ENCODE measurements at regions of chr10 and their contacts with region 1.

Region 1: DNA sequence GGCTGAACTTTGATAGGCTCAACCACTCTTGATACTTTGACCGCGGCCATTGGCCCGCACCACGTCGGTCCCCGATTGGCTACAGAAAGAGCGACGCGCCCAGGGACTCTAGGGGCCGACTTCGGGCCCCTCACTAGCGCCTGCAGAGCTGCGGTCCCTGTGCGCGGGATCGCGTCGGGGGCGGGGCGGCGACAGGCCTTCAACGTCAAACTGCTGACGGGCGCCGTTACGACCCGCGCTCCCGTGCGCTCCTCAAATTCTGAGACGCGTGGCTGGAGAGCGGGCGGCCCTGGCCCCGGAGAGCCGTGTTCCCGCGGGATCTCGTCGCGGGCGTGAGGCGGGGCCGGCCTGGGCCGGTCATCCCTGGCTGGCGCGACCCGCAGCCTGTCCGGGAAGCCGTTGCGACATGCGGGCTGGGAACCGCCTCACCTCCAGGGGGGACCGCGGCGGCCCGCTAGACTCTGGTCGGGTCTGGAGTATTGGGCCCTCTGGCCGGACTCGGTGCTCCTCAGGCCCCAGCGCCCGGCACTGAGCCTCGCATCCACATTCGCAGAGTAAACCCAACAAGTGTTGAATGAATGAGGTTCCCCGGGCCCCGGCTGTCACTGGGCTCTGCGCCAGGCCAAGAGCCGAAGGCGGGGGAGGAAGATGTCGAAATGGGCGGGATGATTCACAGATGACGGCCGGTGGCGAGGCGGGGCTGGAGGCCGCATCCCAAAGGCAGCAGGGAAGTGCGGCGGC is 644 bp upstream of the SLC25A28 start:
- DNase-seq: peak; percentile 79 to 91 (median 86)
- ATAC-seq: peak; percentile 83
- H3K4me3 ChIP-seq: peak overlapping the region; percentile 76 to 78
- H3K4me3 Mint-ChIP-seq: peak overlapping the region; percentile 85
- H3K27ac ChIP-seq: peak overlapping the region; percentile 96 to 97
- H3K27ac Mint-ChIP-seq: peak overlapping the region; percentile 97
- H3K4me1 ChIP-seq: peaks cover 27% of the 10 kb centered on the region
- H3K4me1 Mint-ChIP-seq: peaks cover 45% of the 10 kb centered on the region
- H3K27me3 ChIP-seq: no peaks in the 10 kb centered on the region
- H3K27me3 Mint-ChIP-seq: no peaks in the 10 kb centered on the region
- CTCF ChIP-seq: no peak

Region 2: GRCh38 chr10:98134431-98135221 is 1486.3 kb before region 1 on chr10 and contains the start of gene R3HCC1L:
- CTCF ChIA-PET with region 1: no interaction called
- POLR2A ChIA-PET with region 1: interaction called, 4 read pairs
- intact Hi-C with region 1: loop called in 1 of 2 experiments (anchors 5 kb)
- DNase-seq: peak; percentile 87 to 96 (median 93)
- ATAC-seq: peak; percentile 95
- H3K4me3 ChIP-seq: peak within 1 kb of the TSS; percentile 85
- H3K4me3 Mint-ChIP-seq: peak within 1 kb of the TSS; percentile 92
- H3K27ac ChIP-seq: peak within 1 kb of the TSS; percentile 91 to 93
- H3K27ac Mint-ChIP-seq: peak within 1 kb of the TSS; percentile 97
- H3K4me1 ChIP-seq: peaks cover 23% of the 10 kb centered on the region
- H3K4me1 Mint-ChIP-seq: peaks cover 48% of the 10 kb centered on the region
- H3K27me3 ChIP-seq: no peaks in the 10 kb centered on the region
- H3K27me3 Mint-ChIP-seq: no peaks in the 10 kb centered on the region
- CTCF ChIP-seq: no peak
- total RNA-seq, gene R3HCC1L: 13.6 to 13.7 TPM

Region 3: GRCh38 chr10:98599032-98599610 is 1021.8 kb before region 1 on chr10:
- CTCF ChIA-PET with region 1: no interaction called
- POLR2A ChIA-PET with region 1: no interaction called
- intact Hi-C with region 1: no loop called
- DNase-seq: no peak
- ATAC-seq: no peak
- H3K4me3 ChIP-seq: no peak overlapping the region
- H3K4me3 Mint-ChIP-seq: no peak overlapping the region
- H3K27ac ChIP-seq: no peak overlapping the region
- H3K27ac Mint-ChIP-seq: no peak overlapping the region
- H3K4me1 ChIP-seq: no peaks in the 10 kb centered on the region
- H3K4me1 Mint-ChIP-seq: no peaks in the 10 kb centered on the region
- H3K27me3 ChIP-seq: no peaks in the 10 kb centered on the region
- H3K27me3 Mint-ChIP-seq: peaks cover 13% of the 10 kb centered on the region
- CTCF ChIP-seq: no peak

Region 4: GRCh38 chr10:99292159-99292558 is 328.7 kb before region 1 on chr10:
- CTCF ChIA-PET with region 1: no interaction called
- POLR2A ChIA-PET with region 1: no interaction called
- intact Hi-C with region 1: no loop called
- DNase-seq: no peak
- ATAC-seq: no peak
- H3K4me3 ChIP-seq: no peak overlapping the region
- H3K4me3 Mint-ChIP-seq: no peak overlapping the region
- H3K27ac ChIP-seq: no peak overlapping the region
- H3K27ac Mint-ChIP-seq: no peak overlapping the region
- H3K4me1 ChIP-seq: no peaks in the 10 kb centered on the region
- H3K4me1 Mint-ChIP-seq: no peaks in the 10 kb centered on the region
- H3K27me3 ChIP-seq: no peaks in the 10 kb centered on the region
- H3K27me3 Mint-ChIP-seq: peaks cover 4% of the 10 kb centered on the region
- CTCF ChIP-seq: no peak

Region 5: DNA sequence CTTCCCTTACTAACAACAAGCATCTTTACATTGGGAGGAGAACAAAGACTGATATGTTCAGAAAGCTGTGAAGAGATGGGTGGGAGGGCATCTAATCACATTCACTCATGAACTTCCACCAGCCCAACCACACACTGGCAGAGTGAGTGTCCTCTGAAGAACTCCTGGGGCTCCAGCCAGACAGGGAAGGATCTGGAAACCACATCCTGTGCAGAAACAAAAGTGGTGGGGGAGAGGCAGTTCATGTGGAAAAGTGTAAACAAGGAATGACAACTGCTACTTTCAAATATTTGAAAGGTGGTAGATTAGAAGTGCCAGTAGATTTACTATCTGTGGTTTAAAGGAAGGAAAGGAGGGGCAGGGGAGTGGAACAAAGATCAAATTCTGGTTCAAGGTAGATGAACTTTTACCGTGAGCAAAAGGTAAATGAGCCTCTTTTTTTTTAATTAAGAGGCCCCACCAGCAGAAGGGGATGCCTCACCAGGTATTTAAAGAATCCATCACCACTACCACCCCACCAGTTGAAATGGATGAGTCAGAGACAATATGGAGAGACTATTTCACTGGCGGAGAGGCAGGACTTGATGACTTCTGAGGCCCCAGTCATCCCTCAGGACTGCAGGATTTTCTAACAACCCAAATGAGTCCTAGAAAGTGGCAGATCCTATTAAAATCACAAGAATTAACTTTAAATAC is 225.0 kb before region 1 on chr10:
- CTCF ChIA-PET with region 1: interaction called, 30 read pairs
- POLR2A ChIA-PET with region 1: no interaction called
- intact Hi-C with region 1: no loop called
- DNase-seq: no peak
- ATAC-seq: no peak
- H3K4me3 ChIP-seq: no peak overlapping the region
- H3K4me3 Mint-ChIP-seq: no peak overlapping the region
- H3K27ac ChIP-seq: no peak overlapping the region
- H3K27ac Mint-ChIP-seq: peak overlapping the region; percentile 69
- H3K4me1 ChIP-seq: no peaks in the 10 kb centered on the region
- H3K4me1 Mint-ChIP-seq: peaks cover 9% of the 10 kb centered on the region
- H3K27me3 ChIP-seq: no peaks in the 10 kb centered on the region
- H3K27me3 Mint-ChIP-seq: no peaks in the 10 kb centered on the region
- CTCF ChIP-seq: no peak

Region 6: GRCh38 chr10:99461230-99461629 is 159.7 kb before region 1 on chr10:
- CTCF ChIA-PET with region 1: no interaction called
- POLR2A ChIA-PET with region 1: no interaction called
- intact Hi-C with region 1: no loop called
- DNase-seq: no peak
- ATAC-seq: no peak
- H3K4me3 ChIP-seq: no peak overlapping the region
- H3K4me3 Mint-ChIP-seq: no peak overlapping the region
- H3K27ac ChIP-seq: no peak overlapping the region
- H3K27ac Mint-ChIP-seq: no peak overlapping the region
- H3K4me1 ChIP-seq: no peaks in the 10 kb centered on the region
- H3K4me1 Mint-ChIP-seq: no peaks in the 10 kb centered on the region
- H3K27me3 ChIP-seq: peaks cover 0 to 2% of the 10 kb centered on the region in 2 experiments
- H3K27me3 Mint-ChIP-seq: peaks cover 18% of the 10 kb centered on the region
- CTCF ChIP-seq: no peak

Region 7: DNA sequence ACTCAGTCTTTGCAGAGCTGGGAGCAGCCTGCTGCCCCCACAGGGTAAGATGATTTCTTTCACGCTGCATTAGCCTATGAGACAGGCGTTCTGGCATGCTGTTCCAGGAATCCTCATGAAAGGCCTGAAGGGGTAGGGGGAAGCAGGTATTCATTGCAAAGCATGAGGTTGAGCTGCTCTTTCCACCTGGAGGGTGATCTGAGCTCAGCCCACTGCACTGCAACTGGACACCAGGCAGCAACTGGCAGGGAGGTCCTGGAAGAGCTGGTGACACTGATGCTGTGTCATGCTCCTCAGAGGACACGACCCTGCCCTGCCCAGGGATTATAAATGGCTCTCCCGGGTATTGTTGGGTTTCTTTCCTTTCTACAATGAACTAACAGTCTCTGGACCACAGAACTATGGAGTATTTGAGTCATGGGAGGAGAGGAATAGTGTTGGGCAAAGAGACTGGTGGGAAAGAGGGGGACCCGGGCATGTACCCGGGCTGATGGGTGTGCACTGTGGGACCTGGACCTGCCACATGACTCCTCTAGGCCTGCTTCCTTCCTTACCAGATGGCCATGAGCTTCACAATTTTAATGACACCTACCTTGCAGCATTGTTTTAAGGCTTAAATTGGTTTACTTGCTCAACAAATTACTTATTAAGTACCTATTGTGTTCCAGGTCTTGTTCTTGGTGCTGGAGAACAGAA is 25.0 kb before region 1 on chr10:
- CTCF ChIA-PET with region 1: no interaction called
- POLR2A ChIA-PET with region 1: no interaction called
- intact Hi-C with region 1: no loop called
- DNase-seq: no peak
- ATAC-seq: no peak
- H3K4me3 ChIP-seq: no peak overlapping the region
- H3K4me3 Mint-ChIP-seq: no peak overlapping the region
- H3K27ac ChIP-seq: no peak overlapping the region
- H3K27ac Mint-ChIP-seq: no peak overlapping the region
- H3K4me1 ChIP-seq: no peaks in the 10 kb centered on the region
- H3K4me1 Mint-ChIP-seq: no peaks in the 10 kb centered on the region
- H3K27me3 ChIP-seq: no peaks in the 10 kb centered on the region
- H3K27me3 Mint-ChIP-seq: peaks cover 4% of the 10 kb centered on the region
- CTCF ChIP-seq: no peak

Region 8: DNA sequence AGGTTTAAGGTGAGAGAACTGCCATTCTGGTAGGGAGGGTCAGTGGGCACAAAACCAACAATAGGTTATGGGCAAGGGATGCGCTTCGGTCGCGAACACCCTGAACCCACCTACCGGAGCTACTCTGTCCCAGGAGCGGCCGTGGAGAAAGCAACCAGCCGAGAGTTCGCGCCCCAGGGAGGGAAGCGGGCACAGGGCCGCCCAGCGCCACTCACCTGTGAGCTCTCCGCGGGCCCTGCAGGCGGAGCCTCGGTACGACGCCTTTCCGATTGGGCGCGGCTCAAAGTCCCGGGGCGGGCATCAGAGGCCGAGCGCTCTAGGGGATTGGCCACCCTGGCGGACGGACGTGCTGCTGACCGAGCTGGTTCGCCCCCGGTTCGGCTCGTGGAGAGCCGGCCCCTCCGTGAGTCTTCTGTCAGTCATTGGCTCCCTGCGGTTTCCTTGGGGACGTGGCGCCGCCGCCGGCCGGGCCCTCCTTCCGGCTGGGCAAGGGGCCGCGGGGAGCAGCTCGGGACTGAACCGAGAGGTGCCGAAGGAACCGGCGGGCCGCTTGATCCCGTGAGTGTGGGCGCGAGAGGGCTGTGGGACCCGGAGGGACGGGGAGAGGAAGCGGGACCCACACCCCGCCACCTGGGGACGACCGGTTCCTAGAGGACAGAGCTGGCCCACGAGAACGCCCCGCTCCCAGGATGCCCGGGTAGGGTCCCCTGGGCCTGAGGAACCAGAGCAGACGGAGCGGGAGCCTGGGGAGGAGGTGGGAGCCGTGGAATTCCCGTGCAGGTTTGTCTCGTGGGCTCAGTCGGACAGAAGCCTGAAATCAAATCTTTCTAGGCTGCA is 38.4 kb after region 1 on chr10 and contains the start of gene ENTPD7:
- CTCF ChIA-PET with region 1: interaction called, 4 read pairs
- POLR2A ChIA-PET with region 1: interaction called, 28 read pairs
- intact Hi-C with region 1: loop called (anchors 1 kb)
- DNase-seq: peak; percentile 70 to 92 (median 88)
- ATAC-seq: peak; percentile 97
- H3K4me3 ChIP-seq: peak within 1 kb of the TSS; percentile 67 to 84
- H3K4me3 Mint-ChIP-seq: peak within 1 kb of the TSS; percentile 85
- H3K27ac ChIP-seq: peak within 1 kb of the TSS; percentile 48 to 56
- H3K27ac Mint-ChIP-seq: peak within 1 kb of the TSS; percentile 47
- H3K4me1 ChIP-seq: peaks cover 10% of the 10 kb centered on the region
- H3K4me1 Mint-ChIP-seq: peaks cover 22% of the 10 kb centered on the region
- H3K27me3 ChIP-seq: no peaks in the 10 kb centered on the region
- H3K27me3 Mint-ChIP-seq: peaks cover 8% of the 10 kb centered on the region
- CTCF ChIP-seq: no peak
- total RNA-seq, gene ENTPD7: 1.1 to 1.5 TPM

Region 9: GRCh38 chr10:100009793-100010676 is 389.2 kb after region 1 on chr10 and contains the start of gene DNMBP:
- CTCF ChIA-PET with region 1: no interaction called
- POLR2A ChIA-PET with region 1: no interaction called
- intact Hi-C with region 1: loop called (anchors 2 to 5 kb)
- DNase-seq: peak; percentile 65 to 93 (median 83)
- ATAC-seq: peak; percentile 95
- H3K4me3 ChIP-seq: peak within 1 kb of the TSS; percentile 68 to 76
- H3K4me3 Mint-ChIP-seq: peak within 1 kb of the TSS; percentile 91
- H3K27ac ChIP-seq: peak within 1 kb of the TSS; percentile 36 to 40
- H3K27ac Mint-ChIP-seq: peak within 1 kb of the TSS; percentile 86
- H3K4me1 ChIP-seq: peaks cover 17% of the 10 kb centered on the region
- H3K4me1 Mint-ChIP-seq: peaks cover 44% of the 10 kb centered on the region
- H3K27me3 ChIP-seq: no peaks in the 10 kb centered on the region
- H3K27me3 Mint-ChIP-seq: no peaks in the 10 kb centered on the region
- CTCF ChIP-seq: peak; percentile 47
- total RNA-seq, gene DNMBP: 4.0 to 4.1 TPM

Region 10: GRCh38 chr10:100912605-100913469 is 1292.0 kb after region 1 on chr10 and contains the start of gene SLF2:
- CTCF ChIA-PET with region 1: no interaction called
- POLR2A ChIA-PET with region 1: no interaction called
- intact Hi-C with region 1: loop called in 1 of 2 experiments (anchors 5 kb)
- DNase-seq: peak; percentile 75 to 96 (median 89)
- ATAC-seq: peak; percentile 84
- H3K4me3 ChIP-seq: peak within 1 kb of the TSS; percentile 98 to 100
- H3K4me3 Mint-ChIP-seq: peak within 1 kb of the TSS; percentile 99
- H3K27ac ChIP-seq: peak within 1 kb of the TSS; percentile 67 to 79
- H3K27ac Mint-ChIP-seq: peak within 1 kb of the TSS; percentile 98
- H3K4me1 ChIP-seq: peaks cover 21% of the 10 kb centered on the region
- H3K4me1 Mint-ChIP-seq: peaks cover 48% of the 10 kb centered on the region
- H3K27me3 ChIP-seq: no peaks in the 10 kb centered on the region
- H3K27me3 Mint-ChIP-seq: no peaks in the 10 kb centered on the region
- CTCF ChIP-seq: no peak
- total RNA-seq, gene SLF2: 8.0 to 8.3 TPM